H1 (cell line): ENCODE measurements at regions of chr16 and their contacts with region 1.

Region 1: DNA sequence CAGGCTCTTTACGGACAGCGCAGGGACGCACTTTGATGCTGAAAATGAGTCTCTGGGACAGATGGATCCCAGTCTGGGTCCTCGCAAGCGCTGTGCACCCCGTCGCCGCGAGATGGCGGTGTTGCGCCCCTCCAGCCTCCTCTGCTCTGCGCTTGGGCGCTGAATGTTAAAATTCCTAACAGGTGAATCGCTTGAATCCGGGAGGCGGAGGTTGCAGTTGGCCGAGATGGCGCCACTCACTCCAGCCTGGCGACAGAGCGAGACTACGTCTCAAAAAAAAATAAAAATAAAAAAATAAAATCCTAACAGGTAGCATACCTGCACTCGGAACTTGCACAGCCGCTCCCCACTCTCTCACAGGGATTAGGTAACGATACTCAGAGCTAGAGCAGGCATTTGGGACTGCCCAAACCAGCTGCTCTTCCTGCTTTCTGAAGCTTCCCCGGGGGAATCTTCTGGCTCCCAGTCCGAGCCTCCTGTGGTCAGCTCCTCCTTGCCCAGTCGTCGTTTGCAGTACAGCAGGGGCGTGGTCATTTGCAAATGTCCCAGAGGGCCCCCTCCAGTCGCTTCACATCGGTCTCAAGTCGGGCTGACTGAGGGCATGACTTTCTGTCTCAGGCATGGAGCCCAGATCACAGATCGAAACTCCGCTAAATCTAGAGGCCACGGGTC is 26.2 kb upstream of the OSGIN1 start:
- DNase-seq: peak; percentile 84 to 98
- H3K4me3 ChIP-seq: peak overlapping the region; percentile 16 to 57 (median 40); a peak in 7 of 8 replicates
- H3K27ac ChIP-seq: peak overlapping the region; percentile 67; the same call in 1 of the 2 replicates
- H3K4me1 ChIP-seq: peaks cover 0 to 6% (median 3%) of the 10 kb centered on the region in 4 experiments; a peak in 4 of 7 replicates
- H3K27me3 ChIP-seq: 0 out of 7 replicates have a peak, but pooled peaks cover 0 to 6% (median 0%) of the 10 kb centered on the region in 4 experiments
- CTCF ChIP-seq: peak; percentile 83 to 96 (median 96)
- EP300 ChIP-seq: no peak
- POLR2A ChIP-seq: peak in 1 of 2 experiments; percentile 61; a peak in 2 of 3 replicates
- RAD21 ChIP-seq: peak; percentile 68 to 76

Region 2: DNA sequence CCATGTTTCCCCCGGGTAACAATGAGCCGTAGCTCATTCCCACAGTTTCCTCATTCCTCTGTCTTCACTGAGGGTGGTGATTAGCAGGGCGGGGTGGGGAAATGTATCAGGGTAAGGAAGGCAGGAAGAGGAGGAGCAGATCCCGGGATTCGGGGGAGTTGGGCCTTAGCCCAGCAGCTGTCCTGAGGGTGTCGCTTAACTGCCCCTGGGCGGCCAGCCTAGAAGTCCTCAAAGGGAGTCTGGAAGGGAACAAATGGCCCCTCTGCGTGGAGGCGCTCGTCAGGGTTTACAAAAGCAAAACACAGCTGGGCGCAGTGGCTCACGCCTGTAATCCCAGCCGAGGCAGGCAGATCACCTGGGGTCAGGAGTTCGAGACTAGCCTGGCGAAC is 13.6 kb before region 1 on chr16:
- CTCF ChIA-PET with region 1: interaction called, 26 read pairs
- POLR2A ChIA-PET with region 1: interaction called, 12 read pairs
- DNase-seq: no peak
- H3K4me3 ChIP-seq: no peak overlapping the region
- H3K27ac ChIP-seq: no peak overlapping the region
- H3K4me1 ChIP-seq: no peaks in the 10 kb centered on the region
- H3K27me3 ChIP-seq: no peaks in the 10 kb centered on the region
- CTCF ChIP-seq: no peak
- EP300 ChIP-seq: no peak
- POLR2A ChIP-seq: no peak
- RAD21 ChIP-seq: no peak

Region 3: GRCh38 chr16:83939266-83939855 is 12.5 kb after region 1 on chr16:
- CTCF ChIA-PET with region 1: interaction called, 35 read pairs
- POLR2A ChIA-PET with region 1: interaction called, 19 read pairs
- DNase-seq: no peak
- H3K4me3 ChIP-seq: no peak overlapping the region
- H3K27ac ChIP-seq: no peak overlapping the region
- H3K4me1 ChIP-seq: peaks cover 0 to 5% (median 3%) of the 10 kb centered on the region in 4 experiments; a peak in 3 of 7 replicates
- H3K27me3 ChIP-seq: no peaks in the 10 kb centered on the region; a peak in 2 of 7 replicates
- CTCF ChIP-seq: no peak
- EP300 ChIP-seq: no peak
- POLR2A ChIP-seq: no peak
- RAD21 ChIP-seq: no peak

Region 4: DNA sequence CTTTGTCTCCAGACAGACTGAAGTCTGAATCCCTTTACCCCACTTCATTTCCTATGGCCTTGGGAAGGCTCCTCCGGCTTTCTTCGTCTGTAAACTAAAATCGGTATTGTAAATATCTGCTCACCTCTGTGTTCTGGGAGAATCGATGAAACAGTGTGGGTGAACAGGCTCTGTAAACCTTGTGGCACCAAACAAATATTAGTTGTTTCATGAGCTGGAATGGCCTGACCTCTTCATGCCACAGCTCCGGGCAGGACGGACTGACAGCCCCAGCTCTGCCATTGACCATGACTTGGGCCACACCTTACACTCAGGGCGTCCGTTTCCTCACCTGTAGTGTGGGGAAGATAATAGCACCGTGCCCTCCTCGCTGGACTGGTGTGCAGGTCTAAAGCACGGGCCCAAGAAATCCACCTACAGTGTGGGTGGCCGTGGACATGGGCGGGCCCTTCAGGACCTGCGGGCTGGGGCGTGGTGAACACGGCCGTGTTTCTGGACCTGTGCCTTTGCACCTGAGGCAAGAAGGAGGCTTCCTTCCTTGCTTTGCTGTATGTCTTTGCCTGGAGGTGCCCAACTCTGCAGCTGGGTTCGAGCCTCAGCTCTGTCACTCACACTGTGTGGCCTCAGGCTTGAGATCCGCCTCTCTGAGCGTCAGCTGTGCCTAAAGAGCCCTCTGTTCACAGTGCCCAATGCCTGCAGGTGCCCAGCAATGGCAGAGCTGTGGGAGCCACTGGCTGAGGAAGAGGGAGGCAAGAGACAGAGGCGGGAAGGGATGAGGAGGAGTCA is 20.1 kb after region 1 on chr16:
- CTCF ChIA-PET with region 1: interaction called, 13 read pairs
- POLR2A ChIA-PET with region 1: interaction called, 4 read pairs
- DNase-seq: no peak
- H3K4me3 ChIP-seq: no peak overlapping the region
- H3K27ac ChIP-seq: no peak overlapping the region
- H3K4me1 ChIP-seq: no peaks in the 10 kb centered on the region
- H3K27me3 ChIP-seq: no peaks in the 10 kb centered on the region; a peak in 1 of 7 replicates
- CTCF ChIP-seq: no peak
- EP300 ChIP-seq: no peak
- POLR2A ChIP-seq: no peak
- RAD21 ChIP-seq: no peak

Region 5: DNA sequence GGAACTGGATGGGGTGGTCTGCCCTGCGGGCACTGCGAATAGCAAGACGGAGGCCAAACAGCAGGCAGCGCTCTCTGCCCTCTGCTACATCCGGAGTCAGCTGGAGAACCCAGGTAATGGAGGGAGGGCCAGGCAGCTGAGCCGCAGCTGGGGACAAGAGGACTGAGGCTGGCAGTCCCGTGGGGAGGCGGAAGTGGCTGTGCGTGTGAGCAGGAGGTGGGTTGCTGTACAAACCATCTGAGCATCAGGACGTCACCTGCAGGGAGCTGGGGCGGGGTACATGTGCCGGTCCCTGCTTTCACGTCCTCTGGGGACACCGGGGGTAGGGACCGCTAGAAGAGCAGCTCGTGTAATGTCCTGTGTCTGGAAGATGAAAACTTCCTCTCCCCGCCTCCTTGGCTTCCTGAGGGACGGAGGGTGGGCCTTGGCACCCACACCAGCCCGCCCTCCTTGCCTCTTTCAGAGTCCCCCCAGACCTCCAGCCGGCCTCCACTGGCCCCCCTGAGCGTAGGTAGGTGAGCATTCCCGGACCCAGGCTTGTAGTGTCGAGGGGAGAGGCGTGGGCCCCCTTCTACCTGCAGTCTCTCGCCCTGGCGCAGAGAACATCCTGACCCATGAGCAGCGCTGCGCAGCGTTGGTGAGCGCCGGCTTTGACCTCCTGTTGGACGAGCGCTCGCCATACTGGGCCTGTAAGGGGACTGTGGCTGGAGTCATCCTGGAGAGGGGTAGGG is 267.8 kb after region 1 on chr16:
- CTCF ChIA-PET with region 1: no interaction called
- POLR2A ChIA-PET with region 1: no interaction called
- DNase-seq: no peak
- H3K4me3 ChIP-seq: no peak overlapping the region
- H3K27ac ChIP-seq: no peak overlapping the region
- H3K4me1 ChIP-seq: peaks cover 0 to 3% (median under 1%) of the 10 kb centered on the region in 4 experiments; a peak in 3 of 7 replicates
- H3K27me3 ChIP-seq: no peaks in the 10 kb centered on the region
- CTCF ChIP-seq: peak; percentile 8 to 33 (median 21); a peak in 3 of 4 replicates
- EP300 ChIP-seq: no peak
- POLR2A ChIP-seq: no peak
- RAD21 ChIP-seq: peak; percentile 51 to 60